ENCODE measurements at regions of chr7 and their contacts with region 1.

Region 1: GRCh38 chr7:120805636-120806388 is 52.1 kb downstream of the TSPAN12 start:
- DNase-seq: no peak
- H3K4me3 ChIP-seq: no peak overlapping the region
- H3K27ac ChIP-seq: no peak overlapping the region
- H3K4me1 ChIP-seq: no peaks in the 10 kb centered on the region
- H3K27me3 ChIP-seq: no peaks in the 10 kb centered on the region
- CTCF ChIP-seq: peak; percentile 75 to 87 (median 85)
- EP300 ChIP-seq: no peak
- POLR2A ChIP-seq: no peak

Region 2: GRCh38 chr7:120743128-120743527 is 62.7 kb before region 1 on chr7:
- intact Hi-C with region 1: no loop called
- DNase-seq: no peak
- H3K4me3 ChIP-seq: no peak overlapping the region
- H3K27ac ChIP-seq: no peak overlapping the region
- H3K4me1 ChIP-seq: no peaks in the 10 kb centered on the region
- H3K27me3 ChIP-seq: no peaks in the 10 kb centered on the region
- CTCF ChIP-seq: no peak
- EP300 ChIP-seq: no peak
- POLR2A ChIP-seq: no peak

Region 3: GRCh38 chr7:120857588-120858573 is 52.1 kb after region 1 on chr7 and contains the start of gene TSPAN12:
- intact Hi-C with region 1: loop called (anchors 5 kb)
- DNase-seq: no peak
- H3K4me3 ChIP-seq: peak within 1 kb of the TSS; percentile 68 to 81 (median 74)
- H3K27ac ChIP-seq: peak within 1 kb of the TSS; percentile 82 to 93 (median 84)
- H3K4me1 ChIP-seq: peaks cover 5 to 19% (median 11%) of the 10 kb centered on the region in 4 donors
- H3K27me3 ChIP-seq: no peaks in the 10 kb centered on the region
- CTCF ChIP-seq: peak; percentile 55 to 91 (median 57)
- EP300 ChIP-seq: no peak
- POLR2A ChIP-seq: no peak
- total RNA-seq, gene TSPAN12: 6.5 to 17.7 (median 10.1) TPM

Region 4: GRCh38 chr7:121107923-121108498 is 302.2 kb after region 1 on chr7:
- intact Hi-C with region 1: loop called (anchors 5 kb)
- DNase-seq: no peak
- H3K4me3 ChIP-seq: no peak overlapping the region
- H3K27ac ChIP-seq: no peak overlapping the region
- H3K4me1 ChIP-seq: peaks cover 0 to 4% (median 2%) of the 10 kb centered on the region in 4 donors
- H3K27me3 ChIP-seq: no peaks in the 10 kb centered on the region
- CTCF ChIP-seq: peak; percentile 71 to 80 (median 78)
- EP300 ChIP-seq: no peak
- POLR2A ChIP-seq: no peak

Measured in esophagus muscularis mucosa (tissue), 4 donors.